ENCODE measurements at regions of chr14 and their contacts with region 1.

Region 1: DNA sequence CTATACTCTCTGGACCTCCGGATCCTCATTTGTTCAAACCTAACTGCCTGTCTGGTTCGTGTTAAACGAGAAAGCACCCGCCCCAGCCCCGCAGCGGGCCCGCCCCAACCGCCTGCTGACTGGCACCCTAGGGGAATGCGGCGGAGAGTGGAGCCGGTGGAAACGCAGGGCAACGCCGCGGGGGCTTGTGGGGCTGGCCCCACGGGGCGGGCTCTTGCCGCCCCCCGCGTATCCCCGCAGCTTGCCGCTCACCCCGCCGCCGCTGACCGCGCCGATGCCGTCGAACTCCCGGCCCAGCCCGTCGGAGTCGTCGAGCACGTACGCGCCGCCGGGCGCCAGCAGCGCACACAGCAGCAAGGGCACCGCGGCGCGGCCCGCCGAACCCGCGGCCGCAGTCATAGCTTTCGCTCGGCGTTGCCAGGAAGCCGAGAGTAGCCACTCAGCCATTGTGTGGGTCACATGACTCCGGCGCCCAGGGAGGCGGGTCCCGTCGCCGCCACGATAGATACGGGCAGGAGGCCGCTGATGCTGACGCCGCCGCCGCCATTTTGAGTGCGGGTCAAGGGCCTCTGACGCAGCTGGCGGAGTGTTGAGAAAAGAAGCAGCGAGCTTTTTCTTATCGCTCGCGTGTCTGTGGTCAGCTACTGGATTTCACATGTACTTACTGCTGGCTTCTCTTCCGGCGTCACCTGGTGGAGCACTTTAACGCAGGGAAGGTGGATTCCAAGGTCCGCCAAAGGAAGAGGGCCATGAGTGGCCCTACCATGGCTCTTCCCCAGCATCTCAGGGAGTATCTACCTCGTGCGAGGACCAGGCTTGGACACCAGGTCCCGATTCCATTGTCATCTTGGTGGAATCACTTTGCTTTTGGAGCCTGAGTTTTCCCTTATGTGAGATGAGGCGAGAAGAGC is at the start of gene GALC:
- DNase-seq: peak; percentile 88 to 89
- ATAC-seq: peak; percentile 91 to 93
- H3K4me3 ChIP-seq: peak within 1 kb of the TSS; percentile 74 to 88 (median 80)
- H3K27ac ChIP-seq: peak within 1 kb of the TSS; percentile 86 to 92 (median 88)
- H3K4me1 ChIP-seq: peaks cover 13 to 18% of the 10 kb centered on the region in 2 donors
- H3K27me3 ChIP-seq: no peaks in the 10 kb centered on the region
- CTCF ChIP-seq: no peak
- POLR2A ChIP-seq: peak in 1 of 2 donors; percentile 54
- total RNA-seq, gene GALC: 10.5 to 23.2 (median 14.6) TPM

Region 2: GRCh38 chr14:87732562-87732961 is 260.4 kb before region 1 on chr14:
- in situ Hi-C with region 1: no loop called
- intact Hi-C with region 1: no loop called
- DNase-seq: no peak
- ATAC-seq: no peak
- H3K4me3 ChIP-seq: no peak overlapping the region
- H3K27ac ChIP-seq: no peak overlapping the region
- H3K4me1 ChIP-seq: no peaks in the 10 kb centered on the region
- H3K27me3 ChIP-seq: no peaks in the 10 kb centered on the region
- CTCF ChIP-seq: no peak
- POLR2A ChIP-seq: no peak

Region 3: GRCh38 chr14:87813211-87813610 is 179.8 kb before region 1 on chr14:
- in situ Hi-C with region 1: no loop called
- intact Hi-C with region 1: no loop called
- DNase-seq: no peak
- ATAC-seq: no peak
- H3K4me3 ChIP-seq: no peak overlapping the region
- H3K27ac ChIP-seq: no peak overlapping the region
- H3K4me1 ChIP-seq: no peaks in the 10 kb centered on the region
- H3K27me3 ChIP-seq: no peaks in the 10 kb centered on the region
- CTCF ChIP-seq: no peak
- POLR2A ChIP-seq: no peak

Region 4: GRCh38 chr14:88078525-88078924 is 85.6 kb after region 1 on chr14:
- in situ Hi-C with region 1: no loop called
- intact Hi-C with region 1: no loop called
- DNase-seq: no peak
- ATAC-seq: no peak
- H3K4me3 ChIP-seq: no peak overlapping the region
- H3K27ac ChIP-seq: no peak overlapping the region
- H3K4me1 ChIP-seq: no peaks in the 10 kb centered on the region
- H3K27me3 ChIP-seq: no peaks in the 10 kb centered on the region
- CTCF ChIP-seq: no peak
- POLR2A ChIP-seq: no peak

Region 5: GRCh38 chr14:88385345-88386101 is 392.6 kb after region 1 on chr14 and contains the start of gene SPATA7:
- in situ Hi-C with region 1: no loop called
- intact Hi-C with region 1: loop called (anchors 5 kb)
- DNase-seq: peak; percentile 80 to 84
- ATAC-seq: peak; percentile 93 to 98
- H3K4me3 ChIP-seq: peak within 1 kb of the TSS; percentile 83 to 98 (median 91)
- H3K27ac ChIP-seq: peak within 1 kb of the TSS; percentile 71 to 82 (median 77)
- H3K4me1 ChIP-seq: peaks cover 13% of the 10 kb centered on the region in 2 donors
- H3K27me3 ChIP-seq: no peaks in the 10 kb centered on the region
- CTCF ChIP-seq: no peak
- POLR2A ChIP-seq: peak; percentile 51 to 53
- total RNA-seq, gene SPATA7: 7.2 to 11.2 (median 10.1) TPM

Measured in gastrocnemius medialis (tissue), 4 donors.